Heart left ventricle (tissue), 16 donors: ENCODE measurements at regions of chr1 and their contacts with region 1.

Region 1: GRCh38 chr1:231596337-231596791 is 30.2 kb upstream of the DISC1 start:
- DNase-seq: peak in 1 of 5 donors; percentile 27
- ATAC-seq: peak in 2 of 4 donors; percentile 20 to 36
- H3K4me3 ChIP-seq: no peak overlapping the region
- H3K27ac ChIP-seq: peak overlapping the region in 5 of 12 donors; percentile 18 to 61 (median 25)
- H3K4me1 ChIP-seq: peaks cover 0 to 37% (median 14%) of the 10 kb centered on the region in 12 donors
- H3K27me3 ChIP-seq: no peaks in the 10 kb centered on the region
- CTCF ChIP-seq: no peak
- POLR2A ChIP-seq: no peak

Region 2: DNA sequence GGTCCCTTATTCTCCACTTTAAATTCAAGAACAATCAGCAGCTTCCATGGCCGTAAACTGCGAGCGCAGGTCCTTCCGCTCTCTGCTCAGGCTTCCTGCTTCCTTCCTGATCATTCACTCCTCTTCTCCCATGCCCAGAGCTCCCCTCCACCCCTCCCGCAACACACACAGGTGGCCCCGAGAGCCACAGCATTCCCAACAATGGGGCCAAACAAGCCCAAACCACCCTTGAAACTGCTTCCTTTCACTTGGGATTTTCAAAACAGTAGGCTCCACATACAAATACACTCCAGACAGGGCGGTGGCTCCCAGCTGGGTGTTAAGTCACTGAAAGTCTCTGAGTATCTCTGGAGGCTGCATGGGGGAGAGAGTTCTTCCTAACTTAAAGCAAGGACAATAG is 567.7 kb before region 1 on chr1:
- intact Hi-C with region 1: no loop called
- DNase-seq: peak in 3 of 5 donors; percentile 25 to 38 (median 35)
- ATAC-seq: peak; percentile 37 to 85 (median 50)
- H3K4me3 ChIP-seq: peak overlapping the region in 6 of 12 donors; percentile 6 to 28 (median 12)
- H3K27ac ChIP-seq: peak overlapping the region in 10 of 12 donors; percentile 8 to 59 (median 36)
- H3K4me1 ChIP-seq: peaks cover 0 to 24% (median 0%) of the 10 kb centered on the region in 12 donors
- H3K27me3 ChIP-seq: no peaks in the 10 kb centered on the region
- CTCF ChIP-seq: no peak
- POLR2A ChIP-seq: no peak

Region 3: GRCh38 chr1:231544943-231545592 is 51.3 kb before region 1 on chr1:
- intact Hi-C with region 1: loop called in 1 of 10 experiments (anchors 1 kb)
- DNase-seq: no peak
- ATAC-seq: peak; percentile 52 to 92 (median 60)
- H3K4me3 ChIP-seq: no peak overlapping the region
- H3K27ac ChIP-seq: peak overlapping the region in 8 of 12 donors; percentile 7 to 50 (median 34)
- H3K4me1 ChIP-seq: peaks cover 0 to 44% (median 22%) of the 10 kb centered on the region in 12 donors
- H3K27me3 ChIP-seq: no peaks in the 10 kb centered on the region
- CTCF ChIP-seq: no peak
- POLR2A ChIP-seq: no peak